ENCODE measurements at regions of chr4 and their contacts with region 1.

Region 1: DNA sequence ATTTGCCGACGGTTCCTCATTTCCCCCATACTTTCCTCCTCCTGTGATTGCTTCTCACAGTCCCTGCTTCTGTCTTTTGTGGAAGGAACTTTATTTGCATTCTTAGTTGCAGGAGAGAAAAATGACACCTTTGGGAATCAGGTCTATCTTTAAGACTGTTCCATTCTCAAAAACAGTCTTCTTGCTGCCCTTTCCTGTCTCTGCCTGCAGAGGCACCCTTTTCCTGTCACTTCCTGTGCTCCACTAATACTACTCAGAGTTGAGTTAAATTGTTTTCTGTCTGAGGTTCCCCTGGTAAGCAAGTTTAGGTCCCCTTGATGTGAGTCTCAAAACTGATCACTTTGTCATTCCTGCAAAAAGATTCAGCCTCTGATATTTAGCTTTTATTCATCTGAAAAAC is 208.8 kb upstream of the CLNK start:
- DNase-seq: peak in 1 of 2 experiments; percentile 3
- H3K4me3 ChIP-seq: no peak overlapping the region
- H3K27ac ChIP-seq: no peak overlapping the region
- H3K4me1 ChIP-seq: no peaks in the 10 kb centered on the region
- H3K27me3 ChIP-seq: no peaks in the 10 kb centered on the region
- CTCF ChIP-seq: peak in 2 of 3 experiments; percentile 42 to 77; a peak in 2 of 4 replicates
- EP300 ChIP-seq: no peak
- POLR2A ChIP-seq: no peak
- RAD21 ChIP-seq: peak; percentile 65 to 74

Region 2: DNA sequence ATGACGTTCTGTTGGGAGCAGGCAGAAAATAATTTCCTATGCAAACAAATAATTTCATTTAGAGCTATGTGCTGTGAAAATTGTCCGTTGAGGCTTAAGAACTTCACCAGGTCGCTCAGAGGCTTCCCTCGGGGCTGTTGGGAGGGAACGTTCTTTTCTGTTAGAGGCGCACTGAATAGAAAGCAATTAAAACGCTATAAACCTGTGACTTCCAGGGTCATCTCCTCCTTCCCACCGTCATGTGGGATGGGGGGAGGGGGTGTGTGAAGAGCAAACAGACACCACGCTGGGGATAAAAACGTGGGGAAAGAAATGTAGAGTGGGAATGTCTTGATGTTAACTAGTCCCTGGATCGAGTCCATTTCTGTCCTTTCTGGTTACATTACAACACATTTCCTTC is 400.9 kb before region 1 on chr4:
- CTCF ChIA-PET with region 1: no interaction called
- POLR2A ChIA-PET with region 1: no interaction called
- DNase-seq: no peak
- H3K4me3 ChIP-seq: no peak overlapping the region
- H3K27ac ChIP-seq: no peak overlapping the region
- H3K4me1 ChIP-seq: peaks cover 4 to 14% (median 10%) of the 10 kb centered on the region in 4 experiments; a peak in 5 of 7 replicates
- H3K27me3 ChIP-seq: peaks cover 3 to 12% (median 7%) of the 10 kb centered on the region in 4 experiments; a peak in 5 of 7 replicates
- CTCF ChIP-seq: no peak
- EP300 ChIP-seq: no peak
- POLR2A ChIP-seq: no peak
- RAD21 ChIP-seq: no peak

Region 3: DNA sequence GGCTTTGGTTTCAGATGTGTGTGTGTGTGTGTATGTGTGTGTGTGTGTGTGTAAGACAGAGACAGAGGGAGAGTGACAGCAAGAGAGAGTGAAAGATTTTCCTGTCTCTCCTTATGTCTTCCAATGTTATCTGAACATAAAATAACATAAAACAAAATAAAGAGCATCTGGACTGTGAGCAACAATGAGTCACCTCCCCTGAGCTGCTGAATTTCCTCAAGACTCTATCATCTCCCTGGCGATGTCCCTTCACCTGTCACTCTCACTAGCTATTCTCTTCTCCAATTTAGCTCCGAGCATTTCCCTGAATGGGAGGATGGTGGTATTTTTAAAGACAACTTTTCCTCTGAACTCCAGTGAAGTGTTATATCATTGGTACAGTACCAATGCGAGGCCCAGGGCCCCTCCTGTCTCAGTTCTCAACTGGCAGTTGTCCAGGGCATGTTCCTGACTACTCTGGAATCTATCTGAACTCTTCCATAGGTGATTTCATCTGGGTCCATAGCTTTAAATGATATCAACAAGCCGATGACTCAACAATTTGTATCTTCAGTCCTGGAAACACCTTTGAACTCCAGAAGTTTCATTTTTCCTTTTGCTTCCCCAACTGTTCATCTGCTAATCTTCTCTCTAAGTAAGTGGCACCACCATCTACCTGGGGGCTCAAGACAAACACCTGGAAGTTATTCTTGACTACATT is 13.8 kb before region 1 on chr4:
- CTCF ChIA-PET with region 1: interaction called, 18 read pairs
- POLR2A ChIA-PET with region 1: interaction called, 5 read pairs
- DNase-seq: no peak
- H3K4me3 ChIP-seq: no peak overlapping the region
- H3K27ac ChIP-seq: no peak overlapping the region
- H3K4me1 ChIP-seq: no peaks in the 10 kb centered on the region
- H3K27me3 ChIP-seq: no peaks in the 10 kb centered on the region
- CTCF ChIP-seq: no peak
- EP300 ChIP-seq: no peak
- POLR2A ChIP-seq: no peak
- RAD21 ChIP-seq: no peak